ENCODE measurements at regions of chr7 and their contacts with region 1.

Region 1: DNA sequence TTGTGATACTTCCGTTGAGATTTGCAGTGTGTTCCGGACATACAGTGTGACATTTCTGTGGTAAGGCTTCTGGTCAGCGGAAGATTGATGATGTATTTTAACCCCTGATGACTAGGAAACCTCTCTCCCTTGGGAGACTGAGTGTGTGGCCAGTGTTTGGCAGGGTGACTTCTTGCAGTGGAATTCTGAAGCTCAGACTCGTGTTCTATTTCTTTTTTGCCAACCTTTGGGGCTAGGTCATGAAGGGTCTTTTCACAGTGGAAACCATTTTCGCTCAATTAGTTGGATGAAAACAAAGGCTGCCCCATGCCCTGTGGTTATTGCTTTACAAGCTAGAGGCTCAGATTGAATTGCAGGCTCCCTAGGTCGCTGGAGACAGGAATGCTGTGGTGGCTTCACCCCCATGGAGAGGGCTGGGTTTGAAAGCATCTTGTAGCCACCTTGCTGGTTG is 288.9 kb downstream of the BBS9 start:
- DNase-seq: no peak
- H3K4me3 ChIP-seq: no peak overlapping the region
- H3K27ac ChIP-seq: no peak overlapping the region
- H3K4me1 ChIP-seq: no peaks in the 10 kb centered on the region
- H3K27me3 ChIP-seq: no peaks in the 10 kb centered on the region
- CTCF ChIP-seq: no peak
- EP300 ChIP-seq: no peak
- POLR2A ChIP-seq: no peak

Region 2: GRCh38 chr7:31512166-31512565 is 1906.1 kb before region 1 on chr7:
- in situ Hi-C with region 1: no loop called
- intact Hi-C with region 1: loop called (anchors 5 kb)
- DNase-seq: no peak
- H3K4me3 ChIP-seq: no peak overlapping the region
- H3K27ac ChIP-seq: no peak overlapping the region
- H3K4me1 ChIP-seq: no peaks in the 10 kb centered on the region
- H3K27me3 ChIP-seq: no peaks in the 10 kb centered on the region
- CTCF ChIP-seq: no peak
- EP300 ChIP-seq: no peak
- POLR2A ChIP-seq: no peak

Region 3: GRCh38 chr7:33276325-33276724 is 142.0 kb before region 1 on chr7:
- in situ Hi-C with region 1: no loop called
- intact Hi-C with region 1: no loop called
- DNase-seq: no peak
- H3K4me3 ChIP-seq: no peak overlapping the region
- H3K27ac ChIP-seq: no peak overlapping the region
- H3K4me1 ChIP-seq: no peaks in the 10 kb centered on the region
- H3K27me3 ChIP-seq: no peaks in the 10 kb centered on the region
- CTCF ChIP-seq: no peak
- EP300 ChIP-seq: no peak
- POLR2A ChIP-seq: no peak

Region 4: GRCh38 chr7:33287748-33288147 is 130.5 kb before region 1 on chr7:
- in situ Hi-C with region 1: no loop called
- intact Hi-C with region 1: no loop called
- DNase-seq: no peak
- H3K4me3 ChIP-seq: no peak overlapping the region
- H3K27ac ChIP-seq: no peak overlapping the region
- H3K4me1 ChIP-seq: no peaks in the 10 kb centered on the region
- H3K27me3 ChIP-seq: no peaks in the 10 kb centered on the region
- CTCF ChIP-seq: no peak
- EP300 ChIP-seq: no peak
- POLR2A ChIP-seq: no peak

Region 5: DNA sequence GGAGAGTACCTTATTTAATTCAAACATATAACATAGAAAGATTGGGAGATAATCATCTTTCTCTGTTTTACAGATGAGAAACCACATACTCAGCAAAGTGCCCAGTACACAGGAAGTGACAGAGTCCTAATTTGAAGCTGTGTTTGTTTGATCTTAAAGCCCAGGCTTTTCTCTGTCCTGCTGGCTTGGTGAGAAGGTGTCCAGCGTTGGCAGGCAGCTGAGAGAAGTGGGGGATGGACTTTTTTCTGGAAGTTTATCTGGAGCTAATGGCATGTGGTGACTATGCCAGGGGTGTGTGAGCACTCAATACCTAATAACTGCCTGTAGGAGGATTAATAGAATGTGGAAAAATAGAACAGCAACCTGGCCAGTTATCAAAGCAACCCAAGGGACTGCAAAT is 1300.6 kb after region 1 on chr7:
- in situ Hi-C with region 1: no loop called
- intact Hi-C with region 1: no loop called
- DNase-seq: no peak
- H3K4me3 ChIP-seq: no peak overlapping the region
- H3K27ac ChIP-seq: no peak overlapping the region
- H3K4me1 ChIP-seq: peaks cover 0 to 5% (median 0%) of the 10 kb centered on the region in 4 donors
- H3K27me3 ChIP-seq: no peaks in the 10 kb centered on the region
- CTCF ChIP-seq: no peak
- EP300 ChIP-seq: no peak
- POLR2A ChIP-seq: no peak